ENCODE measurements at regions of chr7 and their contacts with region 1.

Region 1: DNA sequence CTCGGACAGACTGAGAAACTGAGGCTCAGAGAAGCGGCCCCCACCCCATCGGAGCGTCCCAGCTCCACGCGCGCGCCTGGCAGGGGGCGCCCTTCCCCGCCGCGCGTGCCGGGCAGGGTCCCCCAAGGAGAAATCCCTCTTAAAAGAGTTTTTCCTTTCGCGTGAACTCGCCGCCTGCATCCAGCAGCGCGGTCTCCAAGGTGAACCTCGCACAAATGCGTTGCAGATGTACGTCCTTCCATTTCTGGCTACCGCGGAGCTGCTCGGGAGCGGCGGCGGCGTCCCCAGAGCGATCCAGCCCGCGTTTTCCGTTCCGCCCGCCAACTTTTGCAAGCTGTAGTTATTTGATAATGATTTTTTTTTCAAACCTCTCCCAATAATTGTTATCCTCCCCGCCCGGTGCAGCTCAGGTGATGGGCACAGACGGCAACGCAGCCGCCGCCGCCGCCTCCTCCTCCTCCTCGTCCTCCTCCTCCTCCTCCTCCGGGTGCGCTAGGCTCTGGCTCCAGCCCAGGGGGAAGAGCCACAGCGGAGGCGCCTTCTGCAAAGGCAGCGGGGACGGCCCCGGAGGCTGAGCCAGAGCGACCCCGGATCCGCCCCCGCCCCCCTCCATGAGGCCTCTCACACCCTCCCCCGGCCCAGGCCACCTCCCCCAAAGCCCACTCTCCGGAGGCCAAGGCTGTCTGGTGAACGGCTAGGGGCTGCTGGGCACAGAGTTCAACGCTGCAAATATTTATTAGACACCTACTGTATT is 74.0 kb upstream of the CUX1 start:
- DNase-seq: peak; percentile 77
- ATAC-seq: peak; percentile 71
- H3K4me3 Mint-ChIP-seq: peak overlapping the region; percentile 67
- H3K27ac Mint-ChIP-seq: no peak overlapping the region
- H3K4me1 Mint-ChIP-seq: peaks cover 10% of the 10 kb centered on the region
- H3K27me3 Mint-ChIP-seq: peaks cover 3% of the 10 kb centered on the region

Region 2: DNA sequence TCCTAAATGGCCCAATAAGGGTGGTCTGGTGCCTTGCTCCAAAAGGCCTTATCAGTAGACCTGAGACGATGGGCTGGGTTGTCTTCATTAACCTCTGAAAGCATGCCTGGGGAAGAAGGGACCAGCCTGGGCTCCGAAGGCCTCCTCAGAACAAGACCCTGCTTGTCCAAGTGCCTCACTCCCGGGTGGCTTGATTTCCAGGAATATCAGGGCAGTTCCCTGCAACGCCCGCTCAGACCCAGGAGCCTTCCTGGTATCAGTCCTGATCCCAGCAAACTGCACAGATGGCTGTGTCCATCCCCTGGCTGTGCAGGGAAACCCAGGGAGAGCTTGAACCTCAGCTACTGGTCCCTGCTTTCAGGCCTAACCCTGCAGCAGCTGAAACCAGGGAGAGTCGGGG is 24.1 kb after region 1 on chr7:
- CTCF ChIA-PET with region 1: interaction called, 3 read pairs
- POLR2A ChIA-PET with region 1: no interaction called
- intact Hi-C with region 1: loop called in 1 of 2 experiments (anchors 2 kb)
- DNase-seq: no peak
- ATAC-seq: no peak
- H3K4me3 Mint-ChIP-seq: no peak overlapping the region
- H3K27ac Mint-ChIP-seq: no peak overlapping the region
- H3K4me1 Mint-ChIP-seq: no peaks in the 10 kb centered on the region
- H3K27me3 Mint-ChIP-seq: peaks cover 2% of the 10 kb centered on the region

Region 3: DNA sequence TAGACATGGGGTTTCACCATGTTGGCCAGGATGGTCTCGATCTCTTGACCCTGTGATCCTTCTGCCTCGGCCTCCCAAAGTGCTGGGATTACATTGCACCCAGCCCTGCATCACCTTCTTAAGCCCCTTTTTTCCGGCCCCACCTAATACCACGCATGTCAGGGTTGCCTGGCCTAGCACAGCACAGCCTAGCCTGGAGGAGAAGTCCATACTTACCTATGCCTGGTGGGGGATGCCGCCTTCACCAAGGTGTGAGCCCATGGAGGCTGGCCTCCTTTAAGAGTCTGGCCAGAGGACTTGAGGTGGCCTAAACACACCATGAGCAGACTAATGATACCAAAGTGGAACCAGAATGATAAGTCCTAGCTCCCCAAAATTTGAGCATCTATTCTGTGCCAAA is 52.0 kb after region 1 on chr7:
- CTCF ChIA-PET with region 1: no interaction called
- POLR2A ChIA-PET with region 1: no interaction called
- intact Hi-C with region 1: no loop called
- DNase-seq: no peak
- ATAC-seq: no peak
- H3K4me3 Mint-ChIP-seq: no peak overlapping the region
- H3K27ac Mint-ChIP-seq: no peak overlapping the region
- H3K4me1 Mint-ChIP-seq: no peaks in the 10 kb centered on the region
- H3K27me3 Mint-ChIP-seq: no peaks in the 10 kb centered on the region

Region 4: GRCh38 chr7:101856473-101857357 is 113.3 kb after region 1 on chr7:
- CTCF ChIA-PET with region 1: no interaction called
- POLR2A ChIA-PET with region 1: no interaction called
- intact Hi-C with region 1: loop called in 1 of 2 experiments (anchors 1 kb)
- DNase-seq: peak; percentile 89
- ATAC-seq: peak; percentile 91
- H3K4me3 Mint-ChIP-seq: peak overlapping the region; percentile 85
- H3K27ac Mint-ChIP-seq: peak overlapping the region; percentile 97
- H3K4me1 Mint-ChIP-seq: peaks cover 42% of the 10 kb centered on the region
- H3K27me3 Mint-ChIP-seq: no peaks in the 10 kb centered on the region

Region 5: GRCh38 chr7:102236592-102237287 is 493.3 kb after region 1 on chr7:
- CTCF ChIA-PET with region 1: no interaction called
- POLR2A ChIA-PET with region 1: no interaction called
- intact Hi-C with region 1: loop called in 1 of 2 experiments (anchors 1 kb)
- DNase-seq: peak; percentile 73
- ATAC-seq: peak; percentile 77
- H3K4me3 Mint-ChIP-seq: no peak overlapping the region
- H3K27ac Mint-ChIP-seq: no peak overlapping the region
- H3K4me1 Mint-ChIP-seq: no peaks in the 10 kb centered on the region
- H3K27me3 Mint-ChIP-seq: no peaks in the 10 kb centered on the region